AG04450 (cell line): ENCODE measurements at regions of chr1 and their contacts with region 1.

Region 1: GRCh38 chr1:160251687-160252526 is 10.4 kb downstream of the DCAF8 start:
- DNase-seq: peak; percentile 49
- H3K4me3 ChIP-seq: no peak overlapping the region
- H3K27ac ChIP-seq: no peak overlapping the region
- H3K27me3 ChIP-seq: no peaks in the 10 kb centered on the region
- CTCF ChIP-seq: peak; percentile 76

Region 2: GRCh38 chr1:160046494-160047110 is 205.3 kb before region 1 on chr1:
- CTCF ChIA-PET with region 1: interaction called, 13 read pairs
- POLR2A ChIA-PET with region 1: no interaction called
- DNase-seq: no peak
- H3K4me3 ChIP-seq: no peak overlapping the region
- H3K27ac ChIP-seq: no peak overlapping the region
- H3K27me3 ChIP-seq: peaks cover 36% of the 10 kb centered on the region
- CTCF ChIP-seq: peak; percentile 63

Region 3: DNA sequence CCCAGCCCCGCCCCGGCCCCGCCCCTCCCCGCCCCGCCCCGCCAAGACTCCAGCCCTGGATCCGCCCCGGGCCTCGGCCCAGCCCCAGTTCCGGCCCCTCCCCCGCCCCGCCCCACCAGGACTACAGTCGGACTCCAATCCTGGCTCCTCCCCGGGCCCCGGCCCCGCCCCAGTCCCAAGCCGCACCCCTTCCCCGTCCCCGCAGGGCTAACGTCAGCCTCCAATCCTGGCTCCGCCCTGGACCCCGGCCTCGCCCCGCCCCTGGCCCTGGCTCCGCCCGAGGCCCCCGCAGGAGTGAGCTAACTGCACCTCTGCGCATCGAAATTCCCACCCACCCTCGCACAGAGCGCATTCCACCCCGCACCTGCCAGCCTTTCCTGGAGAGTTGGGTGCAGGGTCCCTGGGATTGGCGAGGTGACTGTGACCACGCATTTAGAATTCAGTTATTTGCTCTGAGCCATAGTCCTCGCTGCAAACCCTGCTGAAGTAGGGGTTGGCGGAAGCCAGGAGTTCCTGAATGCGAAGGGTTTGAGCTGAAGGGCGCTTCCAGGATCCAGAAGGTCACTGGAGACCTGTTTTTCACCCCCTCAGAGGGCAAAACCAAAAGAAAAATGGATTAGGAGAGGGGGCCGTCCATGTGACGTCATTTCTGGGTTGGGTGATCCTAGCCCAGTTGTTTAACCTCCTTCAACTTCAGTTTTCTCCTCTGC is 152.9 kb before region 1 on chr1:
- CTCF ChIA-PET with region 1: interaction called, 137 read pairs
- POLR2A ChIA-PET with region 1: interaction called, 3 read pairs
- DNase-seq: peak; percentile 79
- H3K4me3 ChIP-seq: peak overlapping the region; percentile 78
- H3K27ac ChIP-seq: peak overlapping the region; percentile 47
- H3K27me3 ChIP-seq: no peaks in the 10 kb centered on the region
- CTCF ChIP-seq: no peak

Region 4: DNA sequence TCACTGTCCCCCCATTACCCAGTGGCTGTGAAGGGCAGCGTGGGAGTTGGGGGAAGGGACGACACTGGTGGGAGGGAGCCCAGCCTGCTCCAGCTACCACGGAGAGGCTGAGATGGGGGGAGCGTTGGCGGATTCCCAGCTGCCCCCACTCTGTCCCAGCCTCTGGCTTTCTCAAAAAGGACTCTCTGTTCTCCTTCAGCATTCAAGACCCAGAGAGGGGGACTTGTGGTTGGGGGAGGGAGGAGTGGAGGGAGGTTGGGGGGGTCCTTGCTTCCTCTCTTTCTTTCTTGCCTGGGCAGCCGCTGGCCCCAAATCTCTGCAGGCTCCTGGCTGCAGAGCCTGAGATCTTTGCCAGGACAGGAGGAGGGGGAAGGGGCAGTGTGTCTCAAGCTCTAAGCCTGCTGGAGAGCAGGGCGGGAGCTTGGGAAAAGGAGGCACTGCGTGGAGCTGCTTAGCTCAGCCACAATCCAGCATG is 134.2 kb before region 1 on chr1:
- CTCF ChIA-PET with region 1: interaction called, 10 read pairs
- POLR2A ChIA-PET with region 1: interaction called, 3 read pairs
- DNase-seq: no peak
- H3K4me3 ChIP-seq: peak overlapping the region; percentile 17; the same call in 1 of the 2 replicates
- H3K27ac ChIP-seq: no peak overlapping the region
- H3K27me3 ChIP-seq: peaks cover 37% of the 10 kb centered on the region
- CTCF ChIP-seq: no peak

Region 5: GRCh38 chr1:160205242-160206035 is 46.5 kb before region 1 on chr1 and contains the start of gene PEA15:
- CTCF ChIA-PET with region 1: interaction called, 17 read pairs
- POLR2A ChIA-PET with region 1: no interaction called
- DNase-seq: no peak
- H3K4me3 ChIP-seq: peak within 1 kb of the TSS; percentile 95
- H3K27ac ChIP-seq: peak within 1 kb of the TSS; percentile 75
- H3K27me3 ChIP-seq: no peaks in the 10 kb centered on the region
- CTCF ChIP-seq: no peak
- polyA plus RNA-seq, gene PEA15: 512 and 555 TPM in 2 replicates

Region 6: GRCh38 chr1:160226623-160227022 is 25.3 kb before region 1 on chr1:
- CTCF ChIA-PET with region 1: interaction called, 76 read pairs
- POLR2A ChIA-PET with region 1: no interaction called
- DNase-seq: no peak
- H3K4me3 ChIP-seq: no peak overlapping the region
- H3K27ac ChIP-seq: no peak overlapping the region
- H3K27me3 ChIP-seq: no peaks in the 10 kb centered on the region
- CTCF ChIP-seq: no peak

Region 7: DNA sequence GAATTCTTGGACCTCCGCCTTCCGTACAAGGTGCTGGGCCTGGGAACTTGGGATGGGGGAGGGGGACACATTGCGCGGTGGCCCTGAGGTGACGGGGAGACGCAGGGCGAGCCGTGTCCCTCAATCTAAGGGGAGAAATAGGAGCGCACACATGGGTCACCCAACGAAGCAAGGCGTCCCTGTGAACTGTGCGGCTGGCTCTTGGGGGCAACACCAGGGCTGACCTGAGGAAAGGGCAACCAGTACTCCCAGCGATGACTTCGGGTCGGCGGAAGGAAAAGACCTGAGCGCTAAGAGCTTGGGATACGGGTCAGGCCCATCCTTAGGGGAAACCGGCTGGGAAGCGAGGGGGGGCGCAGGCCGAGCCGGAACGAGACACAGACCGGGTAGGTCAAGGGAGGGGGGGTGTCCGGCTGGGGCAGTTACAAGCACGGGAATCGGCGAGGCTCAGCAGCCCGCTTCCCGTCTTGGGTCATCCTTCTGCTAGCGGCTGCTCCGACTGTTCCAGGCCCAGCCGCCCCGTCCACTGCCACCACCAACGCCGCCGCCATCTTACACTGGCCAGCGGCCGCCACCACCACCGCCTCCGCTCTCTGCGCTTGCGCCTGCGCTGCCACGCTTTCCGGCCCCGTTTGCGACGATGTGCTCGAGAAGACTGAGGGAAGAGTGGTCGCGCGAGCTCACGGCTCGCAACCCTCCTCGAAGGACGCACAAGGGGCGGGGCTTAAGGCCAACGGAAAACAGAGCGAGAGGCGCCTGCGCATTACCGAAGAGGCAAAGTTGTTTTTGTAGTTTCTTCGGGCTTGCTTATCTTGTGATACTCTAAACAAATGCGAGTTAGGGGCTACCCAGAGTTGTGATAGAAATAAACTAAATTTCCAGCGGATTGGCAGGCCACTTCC is 10.2 kb after region 1 on chr1 and contains the start of gene DCAF8:
- CTCF ChIA-PET with region 1: interaction called, 42 read pairs
- POLR2A ChIA-PET with region 1: interaction called, 12 read pairs
- DNase-seq: peak; percentile 93
- H3K4me3 ChIP-seq: peak within 1 kb of the TSS; percentile 100
- H3K27ac ChIP-seq: peak within 1 kb of the TSS; percentile 94
- H3K27me3 ChIP-seq: no peaks in the 10 kb centered on the region
- CTCF ChIP-seq: no peak
- polyA plus RNA-seq, gene DCAF8: 108 and 111 TPM in 2 replicates